ENCODE measurements at regions of chr20 and their contacts with region 1.

Region 1: GRCh38 chr20:33803921-33804337 is 7.2 kb upstream of the CHMP4B start:
- DNase-seq: no peak
- H3K4me3 ChIP-seq: no peak overlapping the region
- H3K27ac ChIP-seq: no peak overlapping the region
- H3K27me3 ChIP-seq: no peaks in the 10 kb centered on the region
- CTCF ChIP-seq: no peak

Region 2: GRCh38 chr20:32894026-32894483 is 909.9 kb before region 1 on chr20:
- intact Hi-C with region 1: no loop called
- DNase-seq: no peak
- H3K4me3 ChIP-seq: no peak overlapping the region
- H3K27ac ChIP-seq: no peak overlapping the region
- H3K27me3 ChIP-seq: no peaks in the 10 kb centered on the region
- CTCF ChIP-seq: peak in 7 of 56 donors; percentile 6 to 20 (median 16)

Region 3: DNA sequence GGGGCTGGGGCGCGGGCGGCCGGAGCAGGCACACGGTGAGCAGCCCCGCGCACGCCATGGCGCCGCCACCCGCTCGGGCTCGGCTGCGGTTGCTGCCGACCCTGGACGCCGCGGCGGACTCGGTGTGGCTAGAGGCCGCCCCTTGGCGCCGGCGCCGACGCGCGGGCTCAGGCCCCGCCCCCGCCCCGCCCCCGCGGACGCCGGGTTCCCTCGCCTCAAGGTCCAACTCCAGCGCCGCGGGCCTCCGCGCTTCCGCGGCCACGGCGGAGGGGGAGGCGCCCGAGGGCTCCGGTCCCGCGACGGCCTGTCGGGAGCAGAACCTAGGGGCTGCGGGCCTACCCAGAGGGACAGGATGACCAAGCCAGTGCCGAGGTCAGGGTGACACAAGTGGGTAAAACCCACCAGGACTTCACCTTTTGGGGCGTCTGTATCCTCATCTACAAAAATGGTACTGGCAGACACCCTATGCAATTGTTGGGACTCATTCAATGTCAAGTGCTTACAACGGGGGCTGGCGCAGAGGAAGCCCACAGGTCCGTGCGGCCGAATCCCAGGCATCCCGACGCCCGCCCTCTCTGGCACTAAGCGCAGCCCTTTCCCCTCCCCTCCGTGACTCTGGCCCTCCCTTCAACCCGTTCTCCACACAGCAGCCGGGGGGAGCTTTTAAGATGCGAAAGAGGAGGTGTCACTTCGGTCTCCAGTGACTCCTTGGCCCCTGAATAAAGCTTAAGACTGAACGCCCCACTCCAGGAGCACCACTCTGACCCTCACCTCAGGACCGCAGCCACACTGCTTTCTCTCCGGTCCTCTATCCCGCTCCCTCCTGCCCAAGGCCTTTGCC is 129.4 kb before region 1 on chr20 and contains the start of gene NECAB3:
- intact Hi-C with region 1: loop called in 1 of 2 experiments (anchors 10 kb)
- DNase-seq: peak; percentile 68 to 91 (median 78)
- H3K4me3 ChIP-seq: peak within 1 kb of the TSS; percentile 60 to 92 (median 77)
- H3K27ac ChIP-seq: peak within 1 kb of the TSS; percentile 58 to 96 (median 91)
- H3K27me3 ChIP-seq: no peaks in the 10 kb centered on the region
- CTCF ChIP-seq: peak in 13 of 56 donors; percentile 3 to 46 (median 17)
- total RNA-seq, gene NECAB3: 40.0 to 107 (median 69.5) TPM

Measured in dorsolateral prefrontal cortex (tissue), 120 donors.